Calu3 (cell line): ENCODE measurements at regions of chr19 and their contacts with region 1.

Region 1: GRCh38 chr19:8396563-8397203 is 6.5 kb downstream of the RAB11B start:
- DNase-seq: peak; percentile 41
- H3K4me3 Mint-ChIP-seq: no peak overlapping the region
- H3K27ac Mint-ChIP-seq: no peak overlapping the region
- H3K4me1 Mint-ChIP-seq: peaks cover 7% of the 10 kb centered on the region
- H3K27me3 Mint-ChIP-seq: no peaks in the 10 kb centered on the region
- CTCF ChIP-seq: no peak

Region 2: GRCh38 chr19:8355631-8356402 is 40.9 kb before region 1 on chr19:
- CTCF ChIA-PET with region 1: interaction called, 3 read pairs
- intact Hi-C with region 1: loop called (anchors 2 kb)
- DNase-seq: peak; percentile 34
- H3K4me3 Mint-ChIP-seq: no peak overlapping the region
- H3K27ac Mint-ChIP-seq: no peak overlapping the region
- H3K4me1 Mint-ChIP-seq: no peaks in the 10 kb centered on the region
- H3K27me3 Mint-ChIP-seq: peaks cover 19% of the 10 kb centered on the region
- CTCF ChIP-seq: no peak

Region 3: GRCh38 chr19:8615813-8616596 is 219.3 kb after region 1 on chr19:
- CTCF ChIA-PET with region 1: no interaction called
- intact Hi-C with region 1: no loop called
- DNase-seq: peak; percentile 61
- H3K4me3 Mint-ChIP-seq: no peak overlapping the region
- H3K27ac Mint-ChIP-seq: no peak overlapping the region
- H3K4me1 Mint-ChIP-seq: no peaks in the 10 kb centered on the region
- H3K27me3 Mint-ChIP-seq: peaks cover 39% of the 10 kb centered on the region
- CTCF ChIP-seq: peak; percentile 81

Region 4: DNA sequence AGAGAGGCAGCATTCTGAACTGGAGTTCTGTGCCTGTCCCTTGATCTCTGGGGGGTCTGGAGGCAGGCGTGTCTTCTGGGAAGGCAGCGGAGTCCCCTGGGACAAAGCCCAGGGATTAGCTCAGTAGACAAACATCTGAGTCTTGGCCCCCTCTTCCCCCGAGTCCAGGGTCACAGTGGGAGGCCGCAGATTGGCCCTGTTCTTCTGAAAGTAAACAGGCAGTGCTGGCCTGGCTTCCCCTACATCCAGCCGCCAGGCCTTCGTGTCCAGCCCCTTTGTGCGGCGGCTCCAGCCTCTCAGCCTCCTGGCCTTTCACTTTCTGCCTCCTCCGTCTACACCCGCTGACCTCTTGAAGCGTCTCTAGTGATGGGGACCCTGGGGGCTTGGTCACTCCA is 234.7 kb after region 1 on chr19:
- CTCF ChIA-PET with region 1: no interaction called
- intact Hi-C with region 1: no loop called
- DNase-seq: no peak
- H3K4me3 Mint-ChIP-seq: no peak overlapping the region
- H3K27ac Mint-ChIP-seq: no peak overlapping the region
- H3K4me1 Mint-ChIP-seq: no peaks in the 10 kb centered on the region
- H3K27me3 Mint-ChIP-seq: no peaks in the 10 kb centered on the region
- CTCF ChIP-seq: no peak